ENCODE measurements at regions of chr9 and their contacts with region 1.

Region 1: DNA sequence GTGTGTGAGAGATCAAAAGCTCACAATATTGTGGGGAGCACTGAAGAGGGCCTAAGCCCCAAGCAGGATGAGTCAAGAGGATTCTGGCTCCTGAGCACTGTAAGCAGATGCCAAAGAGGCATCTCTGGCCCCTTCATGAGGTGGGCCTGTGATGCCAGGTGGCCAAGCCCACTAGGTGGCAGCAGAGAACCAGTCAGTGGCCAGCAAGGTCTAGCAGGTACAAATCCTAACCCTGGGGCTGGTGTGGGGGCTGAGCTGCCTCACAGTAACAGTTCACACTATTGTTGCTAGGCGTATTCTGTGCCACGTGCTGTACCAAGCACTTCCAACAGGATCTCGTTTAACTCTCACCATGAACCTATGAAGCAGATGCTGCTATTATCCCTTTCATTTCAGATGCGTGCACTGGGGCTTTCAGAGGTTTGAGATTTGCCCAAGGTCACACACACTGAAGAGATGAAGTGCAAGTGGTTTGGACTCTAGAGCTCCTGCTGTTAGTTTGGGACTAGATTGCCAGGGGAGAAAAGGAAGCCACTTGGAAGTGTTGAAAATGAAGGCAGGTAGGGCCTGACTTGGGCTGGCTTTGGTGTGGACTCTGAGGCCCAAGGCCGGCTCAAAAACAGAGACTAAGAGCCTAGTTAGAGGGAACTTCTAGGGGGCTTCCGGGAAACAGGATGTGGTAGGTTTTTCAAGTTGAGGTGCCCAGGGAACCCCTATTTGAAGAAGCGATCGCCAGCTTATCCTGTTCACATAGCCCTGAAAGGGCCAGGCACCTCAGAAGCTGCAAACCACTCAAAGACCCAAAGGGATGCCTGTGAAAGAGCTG is 4.4 kb upstream of the MLANA start:
- DNase-seq: peak; percentile 75
- H3K4me3 ChIP-seq: no peak overlapping the region
- H3K27ac ChIP-seq: no peak overlapping the region
- H3K4me1 ChIP-seq: no peaks in the 10 kb centered on the region
- CTCF ChIP-seq: peak; percentile 92

Region 2: DNA sequence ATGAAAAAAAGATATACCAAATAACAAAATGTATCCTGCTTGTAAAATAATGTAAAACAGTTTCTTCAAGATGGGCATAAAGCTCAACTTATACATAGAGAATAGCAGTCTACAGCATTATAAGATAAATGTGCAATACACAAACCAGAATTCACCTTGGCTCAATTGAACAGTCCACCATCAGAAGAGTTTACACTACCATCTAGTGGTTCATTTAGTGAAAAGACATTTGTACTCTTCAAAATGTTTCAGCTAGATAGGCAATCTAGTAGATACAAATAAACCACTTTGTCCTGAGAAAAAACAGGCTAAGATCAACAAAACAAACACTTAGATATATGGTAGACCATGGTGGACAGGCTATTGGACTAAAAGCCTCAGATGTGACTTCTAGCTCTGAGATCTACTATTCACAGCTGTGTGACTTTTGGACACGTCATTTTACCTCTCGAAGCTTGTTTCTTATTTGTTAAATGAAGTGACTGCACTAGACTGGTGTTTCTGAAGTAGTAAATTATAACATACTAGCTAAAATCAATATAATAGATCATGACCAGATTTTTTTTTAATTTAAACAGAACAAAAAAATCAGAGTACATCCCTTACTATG is 419.7 kb after region 1 on chr9:
- CTCF ChIA-PET with region 1: interaction called, 3 read pairs
- POLR2A ChIA-PET with region 1: no interaction called
- intact Hi-C with region 1: loop called (anchors 2 kb)
- DNase-seq: peak; percentile 50
- H3K4me3 ChIP-seq: no peak overlapping the region
- H3K27ac ChIP-seq: no peak overlapping the region
- H3K4me1 ChIP-seq: no peaks in the 10 kb centered on the region
- CTCF ChIP-seq: peak; percentile 79